CD4-positive, alpha-beta T cell (primary cell): ENCODE measurements at regions of chrX and their contacts with region 1.

Region 1: DNA sequence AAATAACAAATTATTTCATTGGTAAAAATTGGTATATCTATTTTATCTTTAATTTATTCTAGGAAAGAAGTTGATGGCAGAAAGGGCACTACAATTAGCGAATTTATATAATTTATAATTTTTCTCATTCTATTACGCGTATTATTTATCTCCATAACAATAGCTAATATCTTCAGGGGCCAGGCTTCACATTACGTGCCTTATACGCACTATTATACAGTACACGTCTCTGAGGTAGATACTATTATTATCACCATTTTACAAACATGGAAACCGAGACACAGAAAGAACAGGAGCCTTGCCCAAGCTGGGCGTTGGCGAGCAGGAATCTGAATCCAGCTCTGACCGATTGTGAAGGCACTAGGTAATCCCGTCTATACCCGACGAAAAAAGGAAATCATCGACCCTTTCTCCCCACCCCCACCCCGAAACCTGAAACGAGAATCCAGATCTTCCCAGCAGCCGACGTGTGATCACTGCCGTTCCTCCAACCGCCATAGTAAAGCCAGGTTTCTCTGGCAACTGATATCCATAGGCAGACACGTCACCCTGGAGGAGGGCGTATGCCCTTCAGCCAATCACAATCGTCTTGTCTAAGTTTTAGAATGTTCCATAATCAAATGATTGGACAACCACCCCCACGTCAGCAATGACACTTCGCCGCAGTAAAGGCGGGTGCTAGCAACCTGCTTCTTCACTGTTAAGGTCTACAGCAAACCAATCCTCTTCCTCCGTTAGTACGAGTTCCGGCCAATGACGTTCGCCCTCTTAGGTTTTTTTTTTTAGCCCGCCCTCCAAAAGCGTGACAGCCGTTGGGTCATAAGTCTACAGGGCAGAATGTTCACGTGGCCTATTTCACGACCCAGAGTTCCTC is at the start of gene MORF4L2:
- DNase-seq: peak; percentile 67 to 96 (median 80)
- ATAC-seq: peak; percentile 82
- H3K4me3 ChIP-seq: peak within 1 kb of the TSS; percentile 76
- H3K4me3 Mint-ChIP-seq: peak within 1 kb of the TSS; percentile 85
- H3K27ac ChIP-seq: peak within 1 kb of the TSS; percentile 92 to 99
- H3K27ac Mint-ChIP-seq: no peak within 1 kb of the TSS
- H3K4me1 ChIP-seq: no peaks in the 10 kb centered on the region
- H3K4me1 Mint-ChIP-seq: peaks cover 4% of the 10 kb centered on the region
- H3K27me3 ChIP-seq: no peaks in the 10 kb centered on the region
- H3K27me3 Mint-ChIP-seq: no peaks in the 10 kb centered on the region
- CTCF ChIP-seq: no peak
- total RNA-seq, gene MORF4L2: 201 to 212 TPM

Region 2: GRCh38 chrX:103533511-103534216 is 152.8 kb before region 1 on chrX:
- CTCF ChIA-PET with region 1: no interaction called
- POLR2A ChIA-PET with region 1: no interaction called
- intact Hi-C with region 1: loop called (anchors 5 to 10 kb)
- DNase-seq: peak; percentile 38 to 81 (median 61)
- ATAC-seq: peak; percentile 60
- H3K4me3 ChIP-seq: peak overlapping the region; percentile 20
- H3K4me3 Mint-ChIP-seq: peak overlapping the region; percentile 58
- H3K27ac ChIP-seq: no peak overlapping the region
- H3K27ac Mint-ChIP-seq: no peak overlapping the region
- H3K4me1 ChIP-seq: peaks cover 4% of the 10 kb centered on the region
- H3K4me1 Mint-ChIP-seq: peaks cover 4% of the 10 kb centered on the region
- H3K27me3 ChIP-seq: no peaks in the 10 kb centered on the region
- H3K27me3 Mint-ChIP-seq: no peaks in the 10 kb centered on the region
- CTCF ChIP-seq: peak; percentile 75

Region 3: GRCh38 chrX:103629318-103630170 is 56.9 kb before region 1 on chrX:
- CTCF ChIA-PET with region 1: no interaction called
- POLR2A ChIA-PET with region 1: no interaction called
- intact Hi-C with region 1: loop called (anchors 5 to 10 kb)
- DNase-seq: peak in 5 of 14 experiments; percentile 9 to 45 (median 26)
- ATAC-seq: peak; percentile 59
- H3K4me3 ChIP-seq: peak overlapping the region; percentile 84
- H3K4me3 Mint-ChIP-seq: peak overlapping the region; percentile 94
- H3K27ac ChIP-seq: no peak overlapping the region
- H3K27ac Mint-ChIP-seq: peak overlapping the region; percentile 65
- H3K4me1 ChIP-seq: peaks cover 9% of the 10 kb centered on the region
- H3K4me1 Mint-ChIP-seq: peaks cover 27% of the 10 kb centered on the region
- H3K27me3 ChIP-seq: no peaks in the 10 kb centered on the region
- H3K27me3 Mint-ChIP-seq: no peaks in the 10 kb centered on the region
- CTCF ChIP-seq: no peak

Region 4: DNA sequence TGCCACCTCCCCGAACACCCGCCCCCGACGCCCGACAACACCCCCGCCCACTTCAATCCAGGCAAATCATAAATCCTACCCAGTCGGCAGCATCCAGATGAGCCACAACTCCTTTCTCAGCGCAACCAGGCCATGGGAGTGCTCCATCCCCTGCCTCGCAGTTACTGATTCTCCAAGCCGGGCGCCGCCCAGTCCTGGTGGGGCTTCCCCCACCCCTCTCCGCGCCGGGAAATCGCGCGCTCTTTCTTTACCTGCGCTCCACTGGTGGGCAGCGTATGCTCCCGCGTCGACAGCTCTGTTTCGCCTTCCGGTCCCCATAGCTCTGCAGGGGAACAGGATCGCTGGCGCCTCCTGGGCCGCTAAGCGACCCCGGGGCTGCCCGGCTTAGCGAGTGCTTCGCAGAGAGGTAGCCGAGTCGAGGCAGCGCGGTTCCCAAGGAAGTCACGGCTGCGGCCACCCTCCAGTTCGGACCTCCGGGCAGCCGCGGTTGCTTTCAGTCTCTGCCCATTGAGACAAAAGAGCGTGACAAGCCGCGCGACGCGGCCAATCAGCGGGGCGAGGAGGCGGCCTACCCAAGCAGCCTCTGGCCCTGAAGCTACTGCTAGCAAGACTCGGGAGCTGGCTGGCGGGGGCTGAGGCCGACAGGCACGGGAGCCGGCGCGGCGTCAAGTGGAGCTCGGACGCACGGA is 232.3 kb after region 1 on chrX:
- CTCF ChIA-PET with region 1: no interaction called
- POLR2A ChIA-PET with region 1: interaction called, 8 read pairs
- intact Hi-C with region 1: loop called in 1 of 2 experiments (anchors 5 kb)
- DNase-seq: peak; percentile 18 to 79 (median 41)
- ATAC-seq: peak; percentile 74
- H3K4me3 ChIP-seq: peak overlapping the region; percentile 75
- H3K4me3 Mint-ChIP-seq: peak overlapping the region; percentile 90
- H3K27ac ChIP-seq: peak overlapping the region; percentile 53 to 75
- H3K27ac Mint-ChIP-seq: peak overlapping the region; percentile 95
- H3K4me1 ChIP-seq: peaks cover 25% of the 10 kb centered on the region
- H3K4me1 Mint-ChIP-seq: peaks cover 18% of the 10 kb centered on the region
- H3K27me3 ChIP-seq: no peaks in the 10 kb centered on the region
- H3K27me3 Mint-ChIP-seq: no peaks in the 10 kb centered on the region
- CTCF ChIP-seq: no peak

Region 5: GRCh38 chrX:103999234-103999633 is 312.8 kb after region 1 on chrX:
- CTCF ChIA-PET with region 1: no interaction called
- POLR2A ChIA-PET with region 1: no interaction called
- intact Hi-C with region 1: no loop called
- DNase-seq: no peak
- ATAC-seq: no peak
- H3K4me3 ChIP-seq: no peak overlapping the region
- H3K4me3 Mint-ChIP-seq: no peak overlapping the region
- H3K27ac ChIP-seq: no peak overlapping the region
- H3K27ac Mint-ChIP-seq: no peak overlapping the region
- H3K4me1 ChIP-seq: no peaks in the 10 kb centered on the region
- H3K4me1 Mint-ChIP-seq: no peaks in the 10 kb centered on the region
- H3K27me3 ChIP-seq: no peaks in the 10 kb centered on the region
- H3K27me3 Mint-ChIP-seq: peaks cover 7% of the 10 kb centered on the region
- CTCF ChIP-seq: no peak

Region 6: GRCh38 chrX:104165894-104166737 is 479.7 kb after region 1 on chrX and contains the start of gene FAM199X:
- CTCF ChIA-PET with region 1: no interaction called
- POLR2A ChIA-PET with region 1: no interaction called
- intact Hi-C with region 1: loop called in 1 of 2 experiments (anchors 10 kb)
- DNase-seq: peak; percentile 65 to 91 (median 76)
- ATAC-seq: peak; percentile 98
- H3K4me3 ChIP-seq: peak within 1 kb of the TSS; percentile 90
- H3K4me3 Mint-ChIP-seq: peak within 1 kb of the TSS; percentile 96
- H3K27ac ChIP-seq: peak within 1 kb of the TSS; percentile 64 to 69
- H3K27ac Mint-ChIP-seq: peak within 1 kb of the TSS; percentile 92
- H3K4me1 ChIP-seq: peaks cover 13% of the 10 kb centered on the region
- H3K4me1 Mint-ChIP-seq: peaks cover 39% of the 10 kb centered on the region
- H3K27me3 ChIP-seq: no peaks in the 10 kb centered on the region
- H3K27me3 Mint-ChIP-seq: no peaks in the 10 kb centered on the region
- CTCF ChIP-seq: peak; percentile 44
- total RNA-seq, gene FAM199X: 16.4 to 17.1 TPM

Region 7: DNA sequence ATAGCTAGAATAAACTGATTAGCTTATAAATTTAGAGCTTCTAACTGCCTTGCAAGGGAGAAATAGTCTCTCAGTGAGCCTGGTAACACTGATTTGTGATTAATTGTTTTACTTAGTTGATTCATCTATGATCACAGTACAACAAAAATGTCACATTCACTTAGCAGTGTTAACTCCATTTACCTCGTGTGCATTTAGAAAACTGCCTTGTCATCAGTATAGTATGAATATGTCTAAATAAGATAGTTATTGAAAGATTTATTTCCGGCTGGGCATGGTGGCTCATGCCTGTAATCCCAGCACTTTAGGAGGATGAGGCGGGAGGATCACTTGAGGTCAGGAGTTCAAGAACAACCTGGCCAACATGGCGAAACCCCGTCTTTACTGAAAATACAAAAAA is 519.1 kb after region 1 on chrX:
- CTCF ChIA-PET with region 1: no interaction called
- POLR2A ChIA-PET with region 1: no interaction called
- intact Hi-C with region 1: no loop called
- DNase-seq: no peak
- ATAC-seq: no peak
- H3K4me3 ChIP-seq: no peak overlapping the region
- H3K4me3 Mint-ChIP-seq: no peak overlapping the region
- H3K27ac ChIP-seq: no peak overlapping the region
- H3K27ac Mint-ChIP-seq: no peak overlapping the region
- H3K4me1 ChIP-seq: no peaks in the 10 kb centered on the region
- H3K4me1 Mint-ChIP-seq: no peaks in the 10 kb centered on the region
- H3K27me3 ChIP-seq: no peaks in the 10 kb centered on the region
- H3K27me3 Mint-ChIP-seq: no peaks in the 10 kb centered on the region
- CTCF ChIP-seq: no peak